CD8-positive, alpha-beta memory T cell (primary cell): ENCODE measurements at regions of chr12 and their contacts with region 1.

Region 1: GRCh38 chr12:4276524-4277204 is 3.1 kb downstream of the CCND2 start:
- DNase-seq: peak; percentile 72 to 91 (median 81)
- H3K4me3 ChIP-seq: peak overlapping the region; percentile 2
- H3K4me3 Mint-ChIP-seq: peak overlapping the region; percentile 89 to 99 (median 97)
- H3K27ac ChIP-seq: no peak overlapping the region
- H3K27ac Mint-ChIP-seq: peak overlapping the region; percentile 52 to 100 (median 98)
- H3K4me1 ChIP-seq: peaks cover 59% of the 10 kb centered on the region
- H3K4me1 Mint-ChIP-seq: peaks cover 49 to 73% (median 67%) of the 10 kb centered on the region in 3 donors
- H3K27me3 ChIP-seq: no peaks in the 10 kb centered on the region
- H3K27me3 Mint-ChIP-seq: peaks cover 0 to 5% of the 10 kb centered on the region in 2 donors

Region 2: GRCh38 chr12:3885277-3886094 is 391.2 kb before region 1 on chr12:
- CTCF ChIA-PET with region 1: interaction called, 133 read pairs
- POLR2A ChIA-PET with region 1: interaction called, 16 read pairs
- DNase-seq: peak in 4 of 5 donors; percentile 21 to 64 (median 52)
- H3K4me3 ChIP-seq: no peak overlapping the region
- H3K4me3 Mint-ChIP-seq: no peak overlapping the region
- H3K27ac ChIP-seq: no peak overlapping the region
- H3K27ac Mint-ChIP-seq: peak overlapping the region in 5 of 8 donors; percentile 2 to 75 (median 27)
- H3K4me1 ChIP-seq: no peaks in the 10 kb centered on the region
- H3K4me1 Mint-ChIP-seq: peaks cover 4 to 7% (median 6%) of the 10 kb centered on the region in 3 donors
- H3K27me3 ChIP-seq: no peaks in the 10 kb centered on the region
- H3K27me3 Mint-ChIP-seq: peaks cover 2 to 6% of the 10 kb centered on the region in 2 donors

Region 3: GRCh38 chr12:3998968-3999826 is 277.5 kb before region 1 on chr12:
- CTCF ChIA-PET with region 1: interaction called, 115 read pairs
- POLR2A ChIA-PET with region 1: no interaction called
- DNase-seq: peak in 1 of 5 donors; percentile 21
- H3K4me3 ChIP-seq: no peak overlapping the region
- H3K4me3 Mint-ChIP-seq: no peak overlapping the region
- H3K27ac ChIP-seq: no peak overlapping the region
- H3K27ac Mint-ChIP-seq: peak overlapping the region in 3 of 8 donors; percentile 26 to 63 (median 55)
- H3K4me1 ChIP-seq: peaks cover 5% of the 10 kb centered on the region
- H3K4me1 Mint-ChIP-seq: peaks cover 0 to 19% (median 5%) of the 10 kb centered on the region in 3 donors
- H3K27me3 ChIP-seq: no peaks in the 10 kb centered on the region
- H3K27me3 Mint-ChIP-seq: peaks cover 0 to 4% of the 10 kb centered on the region in 2 donors

Region 4: DNA sequence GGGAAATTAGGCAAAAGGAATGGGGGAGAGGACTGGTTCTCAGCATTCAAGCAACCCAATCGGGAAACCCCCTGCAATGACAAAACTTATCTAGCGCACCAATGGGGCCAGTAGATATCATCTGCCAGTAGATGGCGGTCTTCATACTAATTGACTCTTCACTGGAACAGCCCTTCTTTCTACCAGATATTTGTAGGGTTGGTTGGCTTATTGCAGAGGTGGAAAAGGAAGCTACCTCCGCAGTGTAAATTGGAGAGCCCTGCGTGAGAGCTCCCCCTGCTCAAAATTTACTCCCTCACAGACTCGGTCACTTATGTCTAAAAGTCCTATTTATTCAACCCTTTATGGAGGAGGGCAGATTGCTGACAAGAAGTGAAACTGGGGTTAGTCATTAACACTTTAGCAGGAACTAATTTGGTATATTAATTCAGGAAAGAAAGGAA is 169.2 kb before region 1 on chr12:
- CTCF ChIA-PET with region 1: interaction called, 79 read pairs
- POLR2A ChIA-PET with region 1: interaction called, 12 read pairs
- DNase-seq: peak; percentile 39 to 80 (median 75)
- H3K4me3 ChIP-seq: no peak overlapping the region
- H3K4me3 Mint-ChIP-seq: peak overlapping the region in 5 of 7 donors; percentile 33 to 66 (median 63)
- H3K27ac ChIP-seq: no peak overlapping the region
- H3K27ac Mint-ChIP-seq: peak overlapping the region; percentile 65 to 97 (median 92)
- H3K4me1 ChIP-seq: peaks cover 4% of the 10 kb centered on the region
- H3K4me1 Mint-ChIP-seq: peaks cover 13 to 19% (median 18%) of the 10 kb centered on the region in 3 donors
- H3K27me3 ChIP-seq: peaks cover 4% of the 10 kb centered on the region
- H3K27me3 Mint-ChIP-seq: peaks cover 6 to 9% of the 10 kb centered on the region in 2 donors

Region 5: DNA sequence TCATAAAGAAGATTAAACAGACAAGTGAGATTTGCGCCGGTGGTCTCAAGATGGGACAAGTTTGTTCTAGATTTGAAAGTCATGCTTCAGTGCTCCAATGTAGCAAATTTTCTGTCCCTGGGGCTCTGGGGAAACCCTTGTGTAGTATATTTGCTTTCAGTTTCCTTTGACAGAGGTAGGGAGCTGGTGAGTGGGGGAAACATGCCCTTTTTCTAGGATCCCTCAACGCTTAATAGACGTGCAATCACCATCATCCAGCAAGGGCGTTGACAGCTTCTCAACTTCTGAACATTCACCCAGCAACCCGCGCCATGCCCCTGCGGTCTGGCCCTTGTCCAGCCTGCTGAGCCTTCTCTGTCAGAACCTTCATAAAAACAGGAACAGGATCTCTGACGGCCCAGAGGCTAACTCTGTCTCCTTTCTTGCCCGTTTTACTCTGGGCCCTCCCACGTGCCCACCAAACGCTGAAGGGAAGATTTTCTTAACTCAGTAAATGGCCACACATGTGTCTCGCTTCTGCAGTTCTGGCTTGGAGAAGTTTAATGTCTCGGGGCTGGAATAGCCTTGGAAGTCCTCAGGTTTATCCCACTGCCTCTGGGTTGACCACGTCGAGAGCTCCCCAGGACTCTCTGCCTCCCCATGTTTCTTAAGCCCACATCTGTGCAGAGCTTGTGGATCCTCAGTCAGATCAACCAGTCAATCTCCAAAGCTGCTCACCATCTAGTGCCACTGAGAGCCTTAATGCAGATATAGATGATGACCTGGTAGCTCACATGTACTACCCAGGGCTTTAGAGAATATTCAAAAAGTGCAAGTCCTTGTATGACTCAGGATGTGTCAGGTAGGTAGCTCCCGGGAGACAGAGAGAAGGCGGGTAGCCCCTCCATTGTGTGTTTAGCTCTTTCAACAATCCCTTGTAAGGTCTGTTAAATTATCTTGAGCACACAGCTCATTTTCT is 61.2 kb before region 1 on chr12:
- CTCF ChIA-PET with region 1: interaction called, 11 read pairs
- POLR2A ChIA-PET with region 1: interaction called, 3 read pairs
- DNase-seq: peak in 3 of 5 donors; percentile 4 to 41 (median 32)
- H3K4me3 ChIP-seq: peak overlapping the region; percentile 11
- H3K4me3 Mint-ChIP-seq: peak overlapping the region; percentile 5 to 85 (median 64)
- H3K27ac ChIP-seq: no peak overlapping the region
- H3K27ac Mint-ChIP-seq: peak overlapping the region; percentile 24 to 90 (median 68)
- H3K4me1 ChIP-seq: peaks cover 28% of the 10 kb centered on the region
- H3K4me1 Mint-ChIP-seq: peaks cover 25 to 40% (median 37%) of the 10 kb centered on the region in 3 donors
- H3K27me3 ChIP-seq: no peaks in the 10 kb centered on the region
- H3K27me3 Mint-ChIP-seq: peaks cover 0 to 5% of the 10 kb centered on the region in 2 donors

Region 6: DNA sequence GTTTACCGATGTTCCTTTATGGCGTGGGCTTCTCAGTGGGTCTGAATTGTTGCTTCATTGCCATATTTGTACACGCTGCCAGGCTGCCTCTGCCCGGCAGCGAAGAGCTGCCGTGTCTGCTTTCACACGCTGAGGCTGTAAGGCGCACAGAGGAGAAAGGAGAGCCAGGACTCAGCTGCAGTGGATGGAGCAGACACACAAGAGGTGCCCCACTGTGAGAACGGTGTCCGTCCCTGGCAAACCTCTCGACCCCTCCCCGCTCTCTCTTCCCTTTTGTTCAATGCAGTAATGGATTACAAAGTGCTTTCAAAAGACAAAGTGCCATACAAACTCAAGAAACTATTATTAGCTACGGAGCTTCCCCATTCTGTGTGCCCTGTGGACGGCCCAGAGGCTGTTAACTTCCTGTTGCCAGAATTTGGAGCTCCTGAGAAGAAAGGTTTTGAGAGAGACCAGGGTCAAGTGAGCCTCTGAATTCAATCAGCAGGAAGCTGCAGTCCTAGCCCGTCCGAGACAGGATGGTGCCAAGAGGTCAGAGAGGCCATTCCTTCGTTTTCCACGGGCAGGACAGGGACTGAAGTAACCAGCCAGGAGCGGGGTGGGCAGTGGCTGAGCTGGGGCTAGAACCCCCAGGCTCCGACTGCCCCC is 12.7 kb after region 1 on chr12:
- CTCF ChIA-PET with region 1: interaction called, 10 read pairs
- POLR2A ChIA-PET with region 1: interaction called, 6 read pairs
- DNase-seq: no peak
- H3K4me3 ChIP-seq: no peak overlapping the region
- H3K4me3 Mint-ChIP-seq: no peak overlapping the region
- H3K27ac ChIP-seq: no peak overlapping the region
- H3K27ac Mint-ChIP-seq: peak overlapping the region in 5 of 8 donors; percentile 11 to 81 (median 38)
- H3K4me1 ChIP-seq: peaks cover 62% of the 10 kb centered on the region
- H3K4me1 Mint-ChIP-seq: peaks cover 79 to 97% (median 89%) of the 10 kb centered on the region in 3 donors
- H3K27me3 ChIP-seq: no peaks in the 10 kb centered on the region
- H3K27me3 Mint-ChIP-seq: no peaks in the 10 kb centered on the region

Region 7: GRCh38 chr12:4353785-4354208 is 77.1 kb after region 1 on chr12:
- CTCF ChIA-PET with region 1: no interaction called
- POLR2A ChIA-PET with region 1: no interaction called
- DNase-seq: peak; percentile 36 to 68 (median 54)
- H3K4me3 ChIP-seq: no peak overlapping the region
- H3K4me3 Mint-ChIP-seq: peak overlapping the region in 1 of 7 donors; percentile 33
- H3K27ac ChIP-seq: no peak overlapping the region
- H3K27ac Mint-ChIP-seq: peak overlapping the region in 4 of 8 donors; percentile 29 to 77 (median 62)
- H3K4me1 ChIP-seq: no peaks in the 10 kb centered on the region
- H3K4me1 Mint-ChIP-seq: peaks cover 6 to 10% (median 10%) of the 10 kb centered on the region in 3 donors
- H3K27me3 ChIP-seq: no peaks in the 10 kb centered on the region
- H3K27me3 Mint-ChIP-seq: no peaks in the 10 kb centered on the region

Region 8: GRCh38 chr12:4383304-4383865 is 106.7 kb after region 1 on chr12:
- CTCF ChIA-PET with region 1: no interaction called
- POLR2A ChIA-PET with region 1: no interaction called
- DNase-seq: no peak
- H3K4me3 ChIP-seq: no peak overlapping the region
- H3K4me3 Mint-ChIP-seq: no peak overlapping the region
- H3K27ac ChIP-seq: no peak overlapping the region
- H3K27ac Mint-ChIP-seq: no peak overlapping the region
- H3K4me1 ChIP-seq: no peaks in the 10 kb centered on the region
- H3K4me1 Mint-ChIP-seq: no peaks in the 10 kb centered on the region
- H3K27me3 ChIP-seq: peaks cover 11% of the 10 kb centered on the region
- H3K27me3 Mint-ChIP-seq: peaks cover 1 to 23% of the 10 kb centered on the region in 2 donors

Region 9: DNA sequence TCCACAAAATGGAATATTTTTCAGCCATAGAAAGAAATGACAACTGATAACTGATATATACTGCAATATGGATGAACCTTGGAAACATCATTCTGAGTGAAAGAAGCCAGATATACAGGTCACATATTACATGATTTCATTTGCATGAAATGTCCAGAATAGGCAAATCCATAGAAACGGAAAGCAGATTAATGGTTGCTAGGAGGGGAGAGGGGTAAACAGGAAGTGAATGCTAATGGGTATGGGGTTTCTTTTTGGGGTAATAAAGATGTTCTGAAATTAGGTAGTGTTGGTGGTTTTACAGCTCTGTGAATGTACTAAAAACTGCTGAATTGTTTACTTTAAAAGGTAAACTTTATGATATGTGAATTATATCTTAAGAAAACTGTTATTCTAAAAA is 268.5 kb after region 1 on chr12:
- CTCF ChIA-PET with region 1: no interaction called
- POLR2A ChIA-PET with region 1: no interaction called
- DNase-seq: no peak
- H3K4me3 ChIP-seq: no peak overlapping the region
- H3K4me3 Mint-ChIP-seq: no peak overlapping the region
- H3K27ac ChIP-seq: no peak overlapping the region
- H3K27ac Mint-ChIP-seq: peak overlapping the region in 1 of 8 donors; percentile 59
- H3K4me1 ChIP-seq: no peaks in the 10 kb centered on the region
- H3K4me1 Mint-ChIP-seq: peaks cover 0 to 5% (median 0%) of the 10 kb centered on the region in 3 donors
- H3K27me3 ChIP-seq: no peaks in the 10 kb centered on the region
- H3K27me3 Mint-ChIP-seq: no peaks in the 10 kb centered on the region